ENCODE measurements at regions of chr1 and their contacts with region 1.

Region 1: GRCh38 chr1:47725992-47726855 is 271.0 kb downstream of the TRABD2B start:
- DNase-seq: peak; percentile 75 to 91 (median 89)
- ATAC-seq: peak; percentile 89 to 90
- H3K4me3 ChIP-seq: peak overlapping the region; percentile 22
- H3K27ac ChIP-seq: no peak overlapping the region
- H3K4me1 ChIP-seq: peaks cover 3% of the 10 kb centered on the region
- H3K27me3 ChIP-seq: no peaks in the 10 kb centered on the region

Region 2: DNA sequence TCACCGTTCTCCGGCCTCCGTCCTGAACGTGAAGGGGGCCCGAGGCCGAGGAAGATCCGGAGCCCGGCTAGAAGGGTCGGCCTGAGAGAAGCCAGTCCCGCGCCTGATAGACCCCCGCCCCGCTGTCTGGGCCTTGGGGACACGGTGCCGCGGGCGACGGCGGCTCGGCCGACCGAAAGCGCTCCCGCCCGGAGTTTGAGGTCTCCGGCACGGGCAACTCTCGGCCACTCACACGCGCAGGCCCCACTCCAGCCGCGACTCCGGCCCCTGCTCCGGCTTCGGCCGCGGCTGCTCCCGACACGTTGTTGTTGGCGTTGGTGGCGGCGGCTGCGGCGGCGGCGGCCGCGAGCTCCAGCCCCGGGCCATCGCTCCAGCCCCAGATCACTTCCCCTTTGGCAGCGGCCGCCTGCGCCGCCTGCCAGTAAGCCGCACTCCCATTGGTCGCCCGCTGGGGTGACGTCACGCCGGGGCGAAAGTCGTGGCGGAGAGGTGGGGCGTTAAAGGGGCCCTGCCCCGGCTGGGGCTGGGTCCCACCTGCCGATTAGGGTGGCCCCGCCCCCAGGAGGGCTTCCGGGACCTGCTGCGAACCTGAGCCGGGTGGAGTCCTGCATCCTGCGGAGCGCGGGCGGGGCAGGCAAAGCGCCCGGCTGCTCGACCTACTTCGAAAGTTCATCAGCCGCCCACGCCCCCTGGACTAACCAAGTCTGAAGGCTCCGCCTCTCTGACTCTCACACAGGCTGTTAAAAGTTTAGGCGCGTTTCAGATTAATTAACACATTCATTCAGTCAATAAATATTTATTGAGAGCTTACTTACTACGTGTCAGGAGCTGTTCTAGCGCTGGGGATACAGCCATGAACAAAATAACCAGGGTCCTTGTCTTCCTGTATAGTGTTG is 1007.2 kb before region 1 on chr1 and contains the start of gene EFCAB14:
- intact Hi-C with region 1: no loop called
- DNase-seq: peak; percentile 94 to 99 (median 98)
- ATAC-seq: peak; percentile 99
- H3K4me3 ChIP-seq: peak within 1 kb of the TSS; percentile 98
- H3K27ac ChIP-seq: peak within 1 kb of the TSS; percentile 98
- H3K4me1 ChIP-seq: peaks cover 8% of the 10 kb centered on the region
- H3K27me3 ChIP-seq: no peaks in the 10 kb centered on the region
- total RNA-seq, gene EFCAB14: 67.9 to 78.3 (median 75.5) TPM

Region 3: GRCh38 chr1:47432071-47433036 is 293.9 kb before region 1 on chr1:
- intact Hi-C with region 1: loop called in 2 of 4 experiments (anchors 5 kb)
- DNase-seq: peak; percentile 82 to 87 (median 86)
- ATAC-seq: peak; percentile 80
- H3K4me3 ChIP-seq: no peak overlapping the region
- H3K27ac ChIP-seq: no peak overlapping the region
- H3K4me1 ChIP-seq: no peaks in the 10 kb centered on the region
- H3K27me3 ChIP-seq: no peaks in the 10 kb centered on the region

Region 4: GRCh38 chr1:47437447-47438164 is 288.6 kb before region 1 on chr1 and contains the start of gene FOXD2:
- intact Hi-C with region 1: loop called in 2 of 4 experiments (anchors 5 kb)
- DNase-seq: peak; percentile 86 to 94 (median 93)
- ATAC-seq: peak; percentile 95
- H3K4me3 ChIP-seq: peak within 1 kb of the TSS; percentile 84
- H3K27ac ChIP-seq: no peak within 1 kb of the TSS
- H3K4me1 ChIP-seq: no peaks in the 10 kb centered on the region
- H3K27me3 ChIP-seq: peaks cover 3% of the 10 kb centered on the region
- total RNA-seq, gene FOXD2: 0.06 to 0.08 TPM in 2 of 4 donors, not detected in the others